ENCODE measurements at regions of chr19 and their contacts with region 1.

Region 1: DNA sequence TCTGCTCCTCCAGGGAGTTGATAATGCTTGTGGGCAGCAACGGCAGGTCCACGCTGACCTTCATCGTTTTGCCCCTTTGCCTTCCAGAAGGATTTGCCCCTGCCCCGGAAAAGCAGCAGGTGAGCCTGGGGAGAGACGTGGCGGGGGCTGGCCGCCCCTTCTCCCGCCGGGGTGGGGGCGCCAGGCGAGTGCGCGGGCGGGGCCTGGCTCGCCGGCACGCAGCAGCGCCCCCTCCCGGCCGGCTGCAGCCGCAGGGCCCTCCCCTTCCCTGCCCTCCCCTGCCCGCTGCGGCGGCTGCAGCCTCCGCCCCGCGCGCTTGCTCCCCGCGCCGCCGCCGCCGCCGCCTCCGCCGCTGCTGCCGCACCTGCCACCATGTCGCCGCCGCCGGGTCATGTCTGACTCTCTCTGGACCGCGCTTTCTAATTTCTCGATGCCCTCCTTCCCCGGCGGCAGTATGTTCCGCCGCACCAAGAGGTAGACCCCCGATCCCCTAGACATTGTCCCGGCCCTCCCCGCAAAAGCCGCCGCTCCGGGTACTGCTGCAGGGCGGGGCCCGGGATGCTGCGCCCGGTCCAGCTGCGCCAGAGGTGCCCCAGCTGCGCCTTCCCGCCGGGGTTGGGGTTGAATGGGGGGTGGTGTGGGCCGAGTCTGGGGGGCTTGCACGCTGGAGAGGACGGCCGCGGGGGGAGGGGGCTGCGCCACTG is at the start of gene MAST1:
- DNase-seq: peak; percentile 79 to 88 (median 82)
- ATAC-seq: peak; percentile 64
- H3K4me3 ChIP-seq: peak within 1 kb of the TSS; percentile 74
- H3K27ac ChIP-seq: peak within 1 kb of the TSS; percentile 67
- H3K4me1 ChIP-seq: peaks cover 45 to 66% of the 10 kb centered on the region in 2 experiments
- H3K27me3 ChIP-seq: no peaks in the 10 kb centered on the region; a peak in 1 of 5 replicates
- CTCF ChIP-seq: peak; percentile 30 to 77 (median 66); a peak in 5 of 6 replicates
- EP300 ChIP-seq: no peak
- POLR2A ChIP-seq: no peak
- RAD21 ChIP-seq: 0 out of 4 replicates have a peak, but pooled peaks of 1 of the 2 experiments have one; percentile 34
- polyA plus RNA-seq, gene MAST1: 0.48 to 0.67 TPM

Region 2: GRCh38 chr19:12777217-12778016 is 60.9 kb before region 1 on chr19:
- CTCF ChIA-PET with region 1: interaction called, 3 read pairs
- POLR2A ChIA-PET with region 1: no interaction called
- in situ Hi-C with region 1: no loop called
- intact Hi-C with region 1: loop called (anchors 5 kb)
- DNase-seq: peak; percentile 72 to 89 (median 78)
- ATAC-seq: peak; percentile 76
- H3K4me3 ChIP-seq: peak overlapping the region; percentile 37
- H3K27ac ChIP-seq: peak overlapping the region; percentile 68
- H3K4me1 ChIP-seq: peaks cover 23 to 56% of the 10 kb centered on the region in 2 experiments; a peak in 4 of 5 replicates
- H3K27me3 ChIP-seq: no peaks in the 10 kb centered on the region
- CTCF ChIP-seq: peak; percentile 90 to 96 (median 93)
- EP300 ChIP-seq: peak; percentile 15; the same call in 1 of the 2 replicates
- POLR2A ChIP-seq: no peak
- RAD21 ChIP-seq: peak; percentile 93 to 94